Right ventricle myocardium inferior (tissue), 1 donor: ENCODE measurements at regions of chr3 and their contacts with region 1.

Region 1: DNA sequence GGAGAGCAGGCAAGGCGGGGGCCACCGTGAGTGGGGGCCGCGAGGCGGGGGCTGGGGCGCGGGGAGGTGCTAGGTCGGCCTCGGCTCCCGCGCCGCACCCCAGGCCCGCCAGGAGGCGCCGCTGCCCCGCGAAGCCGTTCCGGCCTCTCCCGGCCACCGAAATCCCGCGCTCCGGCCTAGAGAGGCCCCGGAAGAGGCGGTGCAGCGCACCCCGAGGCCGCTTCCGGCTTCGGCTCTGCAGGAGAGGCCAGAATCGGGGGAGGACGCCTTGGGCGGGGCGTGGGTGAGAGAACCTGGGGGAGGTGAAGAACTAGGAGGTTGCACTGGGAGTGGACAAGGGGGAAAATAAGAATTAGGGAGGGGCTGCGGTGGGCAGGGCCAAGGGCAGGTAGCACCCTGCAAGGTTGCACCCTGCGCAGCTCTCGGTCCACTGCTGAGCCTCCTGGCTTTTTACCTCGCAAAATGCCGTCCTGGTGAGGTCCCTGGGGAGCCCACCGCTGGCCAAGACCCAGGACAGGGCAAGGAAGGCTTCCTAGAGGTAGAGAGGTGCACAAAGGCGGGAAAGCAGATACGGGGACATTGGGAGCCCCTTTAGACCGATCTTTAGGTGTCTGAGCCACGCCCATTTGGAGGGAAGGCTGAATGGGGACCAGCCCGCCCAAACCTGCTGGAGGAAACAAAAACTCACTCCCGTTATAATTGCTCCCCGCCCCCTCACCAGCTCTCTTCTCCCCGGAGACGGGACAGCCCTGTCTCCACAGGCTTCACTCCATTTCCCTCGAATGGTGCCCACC is 8.4 kb upstream of the GNAI2 start:
- DNase-seq: peak; percentile 97
- ATAC-seq: peak; percentile 94

Region 2: DNA sequence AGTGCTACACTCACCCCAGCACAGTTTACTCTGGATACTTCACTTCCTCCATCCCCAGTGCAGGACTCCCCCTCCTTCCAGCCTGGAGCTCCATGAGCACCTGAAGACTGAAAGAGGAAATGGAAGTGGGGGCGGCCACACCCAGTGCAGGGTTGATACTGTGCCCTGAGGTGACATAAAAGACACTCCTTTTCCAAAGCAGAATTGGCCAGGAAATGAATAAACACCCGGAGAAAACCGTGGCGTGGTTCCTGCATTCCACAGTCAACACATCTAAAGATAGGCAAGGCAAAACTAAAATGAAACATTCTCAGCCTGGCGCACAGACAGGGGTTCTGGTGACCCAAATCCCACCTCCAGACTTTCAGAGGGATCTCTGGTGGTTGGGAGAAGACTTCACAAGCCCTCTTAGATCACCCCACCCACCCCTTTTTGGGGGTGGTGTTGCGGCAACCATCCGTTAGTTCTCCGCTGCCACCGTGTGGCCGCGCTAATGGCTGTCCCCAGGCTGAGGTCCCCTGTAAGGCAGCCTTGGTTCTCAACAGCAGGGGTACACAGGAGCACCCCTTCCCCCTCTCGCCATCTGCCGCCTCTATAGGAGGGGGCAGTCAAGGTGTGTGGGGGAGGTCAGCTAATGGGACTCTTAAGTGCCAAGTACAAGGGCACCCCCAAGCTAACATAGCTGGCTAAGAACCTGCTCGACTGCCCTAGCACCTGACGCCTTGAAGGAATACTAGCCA is 321.4 kb before region 1 on chr3:
- intact Hi-C with region 1: no loop called
- DNase-seq: peak; percentile 74
- ATAC-seq: peak; percentile 57

Region 3: DNA sequence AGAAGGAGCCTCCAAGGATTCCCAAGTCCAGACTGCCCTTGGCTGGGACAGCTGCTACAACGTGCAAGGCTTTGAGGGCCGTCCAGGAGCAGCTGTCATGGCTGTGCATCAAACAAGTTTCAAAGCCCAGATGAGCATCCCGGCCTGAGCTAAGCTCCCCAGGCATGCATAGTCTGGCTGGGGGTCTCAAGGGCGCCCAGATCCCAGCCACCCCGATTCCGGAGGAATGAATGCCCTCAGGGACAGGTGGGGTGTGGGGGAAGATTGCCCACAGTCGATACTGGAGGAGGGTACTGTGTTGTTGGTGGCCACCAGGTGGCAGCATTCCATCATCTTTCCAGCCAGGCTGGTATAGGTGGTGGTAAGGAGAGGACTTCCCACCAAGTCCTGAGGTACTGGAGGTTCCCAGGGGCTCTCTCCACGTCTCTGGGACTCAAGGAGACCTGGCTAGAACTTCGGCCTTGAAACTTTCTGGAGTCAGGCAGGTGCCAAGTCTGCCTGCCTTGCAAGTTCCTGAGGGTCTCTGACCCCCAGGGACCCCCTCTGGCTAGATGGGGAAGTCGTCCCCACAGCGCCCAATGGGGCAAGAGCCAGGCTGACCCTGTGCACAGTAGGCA is 106.1 kb before region 1 on chr3:
- intact Hi-C with region 1: loop called (anchors 2 kb)
- DNase-seq: no peak
- ATAC-seq: peak; percentile 86

Region 4: DNA sequence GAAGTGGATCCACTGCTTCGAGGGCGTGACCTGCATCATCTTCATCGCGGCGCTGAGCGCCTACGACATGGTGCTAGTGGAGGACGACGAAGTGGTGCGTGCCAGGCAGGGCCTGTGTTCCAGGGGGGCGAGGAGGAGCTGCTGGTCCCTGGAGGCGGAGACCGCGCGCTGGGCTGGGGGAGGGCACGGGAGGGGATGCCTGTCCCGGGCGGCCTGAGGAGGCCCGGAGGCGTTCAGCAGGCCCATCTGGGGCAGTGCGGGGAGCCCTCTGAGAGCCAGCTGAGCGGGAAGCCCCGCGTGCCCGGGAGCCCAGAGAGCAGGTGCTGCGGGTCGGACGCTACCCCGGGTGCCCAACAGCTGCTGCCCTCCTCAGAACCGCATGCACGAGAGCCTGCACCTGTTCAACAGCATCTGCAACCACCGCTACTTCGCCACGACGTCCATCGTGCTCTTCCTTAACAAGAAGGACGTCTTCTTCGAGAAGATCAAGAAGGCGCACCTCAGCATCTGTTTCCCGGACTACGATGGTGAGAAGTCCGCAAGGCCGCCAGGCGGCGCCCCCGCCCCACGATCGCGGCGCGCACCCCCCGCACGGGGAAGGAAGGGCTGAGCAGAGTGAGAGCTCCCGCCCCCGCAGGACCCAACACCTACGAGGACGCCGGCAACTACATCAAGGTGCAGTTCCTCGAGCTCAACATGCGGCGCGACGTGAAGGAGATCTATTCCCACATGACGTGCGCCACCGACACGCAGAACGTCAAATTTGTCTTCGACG is 33.3 kb before region 1 on chr3:
- intact Hi-C with region 1: loop called (anchors 1 kb)
- DNase-seq: peak; percentile 73
- ATAC-seq: peak; percentile 76

Region 5: GRCh38 chr3:50245831-50246516 is 18.4 kb after region 1 on chr3:
- intact Hi-C with region 1: loop called (anchors 1 kb)
- DNase-seq: peak; percentile 96
- ATAC-seq: peak; percentile 79

Region 6: GRCh38 chr3:50260027-50260941 is 32.7 kb after region 1 on chr3:
- intact Hi-C with region 1: no loop called
- DNase-seq: peak; percentile 97
- ATAC-seq: peak; percentile 86

Region 7: DNA sequence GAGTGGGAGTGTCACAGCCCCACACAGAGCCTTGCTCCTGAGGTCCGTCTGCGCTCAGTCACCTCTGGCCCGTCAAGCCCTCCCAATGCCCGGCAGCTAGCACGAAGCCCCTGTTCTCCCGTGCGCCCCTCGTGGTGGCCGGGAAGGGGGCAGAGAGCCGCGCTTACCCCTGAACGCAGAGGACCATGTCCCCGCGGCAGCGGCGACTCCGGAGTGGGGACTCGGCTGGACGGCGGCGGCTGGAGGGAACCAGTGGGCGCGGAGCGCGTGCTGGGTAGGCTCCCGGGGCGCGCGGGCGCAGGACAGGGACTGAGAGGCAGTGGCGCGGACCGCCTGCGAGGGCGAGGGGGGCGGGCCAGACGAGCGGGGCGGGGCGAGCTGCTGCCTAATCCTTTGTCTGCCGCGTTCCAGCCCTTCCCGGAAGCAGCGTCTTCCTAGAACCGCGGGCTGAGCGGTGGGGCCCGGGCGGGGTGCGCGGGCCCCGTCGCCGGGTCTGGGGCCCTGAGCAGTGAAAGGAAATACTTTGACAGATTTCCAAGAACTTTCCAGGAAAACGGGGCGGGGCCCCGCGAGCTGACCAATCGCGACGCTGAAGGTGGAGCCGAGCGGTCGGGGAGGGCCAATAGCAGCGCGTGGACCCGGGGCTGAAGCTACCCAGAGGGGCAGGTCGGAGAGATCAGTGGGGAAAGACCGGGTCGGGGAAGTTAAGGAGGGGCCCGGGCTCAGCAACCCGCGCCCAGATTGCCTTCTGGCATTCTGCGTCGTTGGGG is 384.1 kb after region 1 on chr3 and contains the start of gene CISH:
- intact Hi-C with region 1: no loop called
- DNase-seq: peak; percentile 98
- ATAC-seq: peak; percentile 87
- total RNA-seq, gene CISH: 13.2 TPM